ENCODE measurements at regions of chr5 and their contacts with region 1.

Region 1: DNA sequence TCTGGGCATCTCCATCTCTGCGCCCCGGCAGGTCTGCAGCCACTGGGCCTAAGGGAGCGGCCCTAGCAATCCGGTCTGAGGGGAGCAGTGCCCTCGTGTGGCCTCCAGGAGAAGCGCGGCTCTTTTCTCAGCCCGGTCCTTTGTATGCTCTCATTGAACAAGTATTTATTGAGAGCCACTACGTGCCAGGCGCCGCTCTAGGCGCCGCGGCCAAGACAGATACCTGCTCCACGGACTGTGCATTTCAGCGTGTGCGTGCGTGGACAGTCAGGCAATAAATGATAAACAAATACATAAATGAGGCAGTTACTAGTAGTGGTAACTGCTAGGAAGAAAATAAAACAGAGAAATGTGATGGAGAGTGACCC is 2.3 kb upstream of the SLC4A9 start:
- DNase-seq: peak; percentile 91
- CTCF ChIP-seq: peak; percentile 91

Region 2: DNA sequence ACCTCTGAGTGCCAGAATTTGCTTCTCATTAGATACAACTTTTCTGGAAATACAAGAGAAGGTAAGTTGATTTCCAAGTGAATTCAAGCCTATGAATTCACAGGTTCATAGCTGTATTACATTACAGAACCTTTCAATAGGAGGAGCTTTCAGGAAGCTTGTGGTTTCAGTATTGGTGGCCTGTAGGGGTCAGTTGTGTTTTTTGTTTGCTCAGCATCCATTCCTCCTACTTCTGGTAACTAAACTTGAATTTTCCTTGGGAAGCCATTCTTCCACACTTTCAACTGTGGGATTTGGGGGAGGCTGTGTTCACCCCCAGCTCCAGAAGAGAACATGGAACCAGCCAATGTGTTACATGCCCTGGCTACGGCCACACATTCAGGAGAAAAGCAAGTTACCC is 188.3 kb before region 1 on chr5:
- in situ Hi-C with region 1: loop called (anchors 10 kb)
- DNase-seq: no peak
- CTCF ChIP-seq: no peak

Region 3: GRCh38 chr5:140234377-140234989 is 123.2 kb before region 1 on chr5:
- in situ Hi-C with region 1: loop called (anchors 5 kb)
- DNase-seq: no peak
- CTCF ChIP-seq: no peak

Region 4: GRCh38 chr5:140664359-140665119 is 306.8 kb after region 1 on chr5 and contains the start of gene WDR55:
- in situ Hi-C with region 1: no loop called
- DNase-seq: peak; percentile 95
- CTCF ChIP-seq: no peak

Region 5: DNA sequence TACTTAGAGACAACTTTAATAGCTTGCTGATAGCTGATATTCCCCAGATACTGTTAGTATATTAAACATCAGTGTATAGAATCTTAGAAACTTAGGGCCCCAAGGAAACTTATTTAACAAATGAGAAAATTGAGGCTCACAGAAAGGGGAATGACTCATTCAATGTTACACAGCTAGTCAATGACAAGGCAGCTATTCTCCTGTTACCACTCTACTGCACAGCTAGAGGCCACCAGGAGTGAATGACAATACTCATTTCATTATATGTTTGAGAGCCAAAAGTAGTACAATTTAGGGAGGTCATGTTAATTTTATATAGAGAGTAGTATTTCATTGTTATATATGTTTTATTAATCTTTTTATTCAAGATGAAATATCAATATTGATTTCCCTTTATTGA is 660.2 kb after region 1 on chr5:
- in situ Hi-C with region 1: no loop called
- DNase-seq: no peak
- CTCF ChIP-seq: no peak

Measured in GM13976 (cell line).